CD8-positive, alpha-beta T cell (primary cell): ENCODE measurements at regions of chr21 and their contacts with region 1.

Region 1: GRCh38 chr21:42164064-42164789 is 54.7 kb upstream of the ABCG1 start:
- DNase-seq: peak in 8 of 9 experiments; percentile 36 to 75 (median 58)
- ATAC-seq: peak; percentile 34
- H3K4me3 ChIP-seq: no peak overlapping the region
- H3K4me3 Mint-ChIP-seq: no peak overlapping the region
- H3K27ac ChIP-seq: no peak overlapping the region
- H3K27ac Mint-ChIP-seq: no peak overlapping the region
- H3K4me1 ChIP-seq: peaks cover 34% of the 10 kb centered on the region
- H3K4me1 Mint-ChIP-seq: peaks cover 32% of the 10 kb centered on the region
- H3K27me3 ChIP-seq: no peaks in the 10 kb centered on the region
- H3K27me3 Mint-ChIP-seq: no peaks in the 10 kb centered on the region
- CTCF ChIP-seq: peak; percentile 51

Region 2: DNA sequence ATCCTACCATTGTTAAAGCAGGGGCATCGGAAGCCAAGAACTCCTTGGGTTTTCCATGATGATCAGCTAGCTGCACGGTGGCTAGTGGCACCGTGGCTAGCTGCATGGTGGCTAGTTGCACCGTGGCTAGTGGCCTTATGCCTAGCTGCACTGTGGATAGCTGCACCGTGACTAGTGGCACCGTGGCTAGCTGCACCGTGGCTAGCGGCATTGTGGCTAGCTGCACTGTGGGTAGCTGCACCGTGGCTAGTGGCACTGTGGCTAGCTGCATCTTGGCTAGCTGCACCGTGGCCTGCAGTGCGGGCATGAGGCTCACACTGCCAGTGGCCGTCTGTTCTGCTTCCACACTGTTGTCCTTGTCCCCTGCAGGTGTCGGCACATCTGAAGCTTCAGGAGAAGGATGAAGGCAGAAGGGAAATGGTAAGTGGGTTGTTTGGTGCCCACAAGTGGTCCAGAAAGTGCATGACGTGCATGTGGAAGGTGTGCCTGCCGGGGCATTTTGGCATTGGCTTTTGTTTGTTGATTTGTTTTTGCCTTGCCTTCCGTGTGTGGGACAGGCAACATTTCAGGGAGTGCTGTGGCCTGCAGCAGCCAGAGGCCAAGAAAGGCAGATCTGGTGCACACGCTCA is 112.4 kb after region 1 on chr21:
- CTCF ChIA-PET with region 1: interaction called, 10 read pairs
- POLR2A ChIA-PET with region 1: no interaction called
- intact Hi-C with region 1: no loop called
- DNase-seq: no peak
- ATAC-seq: no peak
- H3K4me3 ChIP-seq: no peak overlapping the region
- H3K4me3 Mint-ChIP-seq: no peak overlapping the region
- H3K27ac ChIP-seq: no peak overlapping the region
- H3K27ac Mint-ChIP-seq: no peak overlapping the region
- H3K4me1 ChIP-seq: no peaks in the 10 kb centered on the region
- H3K4me1 Mint-ChIP-seq: no peaks in the 10 kb centered on the region
- H3K27me3 ChIP-seq: no peaks in the 10 kb centered on the region
- H3K27me3 Mint-ChIP-seq: no peaks in the 10 kb centered on the region
- CTCF ChIP-seq: no peak

Region 3: DNA sequence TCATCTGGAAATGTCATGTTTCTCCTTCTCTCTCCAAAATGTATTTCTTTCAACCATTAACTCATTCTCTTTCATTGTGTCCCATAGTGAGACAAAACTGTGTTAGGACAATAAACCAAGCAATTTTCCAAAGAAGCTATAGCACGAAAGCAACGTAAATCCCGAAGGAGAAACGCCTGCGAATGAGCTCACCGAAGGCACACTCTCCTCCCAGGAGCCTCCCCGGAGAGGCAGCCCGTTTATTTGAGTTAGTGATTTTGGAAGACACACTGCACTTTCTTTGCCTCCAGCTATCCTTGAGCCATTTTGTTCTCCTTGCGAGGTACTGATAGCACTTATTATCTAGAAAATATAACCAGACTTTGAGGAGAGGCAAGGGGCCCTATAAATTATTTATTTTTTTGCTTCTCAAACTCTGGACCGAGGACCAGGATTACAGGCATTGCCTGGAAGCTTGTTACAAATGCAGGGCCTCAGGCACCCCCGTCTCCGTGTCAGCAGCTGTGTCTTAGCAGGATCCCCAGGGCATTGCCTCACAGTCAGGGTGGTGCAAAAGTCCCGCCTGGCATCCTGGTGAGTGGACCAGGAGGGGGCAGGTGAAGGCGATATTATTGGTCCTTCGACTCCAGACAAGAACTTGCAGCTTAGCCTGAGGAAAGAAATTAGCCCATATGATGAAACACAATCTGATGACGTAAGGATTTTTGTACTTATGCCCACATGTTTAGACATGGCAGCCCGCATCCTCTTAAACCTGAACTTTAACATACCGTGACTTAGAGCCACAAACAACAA is 290.8 kb after region 1 on chr21:
- CTCF ChIA-PET with region 1: interaction called, 5 read pairs
- POLR2A ChIA-PET with region 1: no interaction called
- intact Hi-C with region 1: loop called in 1 of 2 experiments (anchors 1 kb)
- DNase-seq: no peak
- ATAC-seq: no peak
- H3K4me3 ChIP-seq: no peak overlapping the region
- H3K4me3 Mint-ChIP-seq: no peak overlapping the region
- H3K27ac ChIP-seq: no peak overlapping the region
- H3K27ac Mint-ChIP-seq: no peak overlapping the region
- H3K4me1 ChIP-seq: peaks cover 20% of the 10 kb centered on the region
- H3K4me1 Mint-ChIP-seq: peaks cover 35% of the 10 kb centered on the region
- H3K27me3 ChIP-seq: no peaks in the 10 kb centered on the region
- H3K27me3 Mint-ChIP-seq: no peaks in the 10 kb centered on the region
- CTCF ChIP-seq: no peak